ENCODE measurements at regions of chr6 and their contacts with region 1.

Region 1: GRCh38 chr6:89792873-89793272 is 26.7 kb downstream of the MDN1 start:
- H3K4me3 ChIP-seq: no peak overlapping the region
- H3K27ac ChIP-seq: no peak overlapping the region
- H3K4me1 ChIP-seq: no peaks in the 10 kb centered on the region
- CTCF ChIP-seq: peak; percentile 56

Region 2: GRCh38 chr6:89483111-89483720 is 309.7 kb before region 1 on chr6:
- CTCF ChIA-PET with region 1: no interaction called
- POLR2A ChIA-PET with region 1: no interaction called
- H3K4me3 ChIP-seq: no peak overlapping the region
- H3K27ac ChIP-seq: peak overlapping the region; percentile 42; the same call in 1 of the 2 replicates
- H3K4me1 ChIP-seq: peaks cover 6% of the 10 kb centered on the region; the same call in 1 of the 2 replicates
- CTCF ChIP-seq: no peak

Region 3: GRCh38 chr6:89805814-89806371 is 13.0 kb after region 1 on chr6:
- CTCF ChIA-PET with region 1: interaction called, 22 read pairs
- POLR2A ChIA-PET with region 1: no interaction called
- H3K4me3 ChIP-seq: no peak overlapping the region
- H3K27ac ChIP-seq: no peak overlapping the region
- H3K4me1 ChIP-seq: no peaks in the 10 kb centered on the region; the same call in 1 of the 2 replicates
- CTCF ChIP-seq: no peak

Region 4: DNA sequence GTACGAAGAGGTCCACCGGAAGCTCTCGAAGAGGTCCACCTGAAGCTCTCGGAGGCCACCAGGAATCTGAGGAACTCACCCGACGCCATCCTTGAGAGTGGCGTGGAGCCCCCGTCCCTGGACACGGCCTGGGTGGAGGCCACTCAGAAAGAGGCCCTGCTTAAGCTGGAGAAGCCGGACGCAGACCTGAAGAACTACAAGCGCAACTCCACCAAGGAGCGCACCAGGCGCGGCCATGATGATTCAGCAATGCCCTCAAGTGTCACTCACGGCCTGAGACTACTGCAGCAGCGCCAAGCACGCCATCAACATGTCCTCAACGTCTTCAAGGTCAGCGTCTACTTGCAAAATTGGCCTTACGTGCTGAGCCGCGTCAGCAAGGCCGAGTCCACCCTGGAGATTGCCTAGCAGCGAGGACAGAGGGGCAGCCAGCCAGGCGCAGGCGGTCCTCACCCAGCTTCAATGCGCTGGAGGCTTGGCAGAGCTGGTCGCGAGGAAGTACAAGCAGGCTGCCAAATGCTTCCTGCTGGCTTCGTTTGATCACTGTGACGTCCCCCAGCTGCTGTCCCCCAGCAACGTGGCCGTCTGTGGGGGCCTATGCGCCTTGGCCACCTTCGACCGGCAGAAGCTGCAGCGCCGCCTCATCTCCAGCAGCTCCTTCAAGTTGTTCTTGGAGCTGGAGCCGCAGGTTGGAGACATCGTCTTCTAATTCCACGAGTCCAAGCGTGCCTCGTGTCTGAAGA is 93.7 kb after region 1 on chr6:
- CTCF ChIA-PET with region 1: no interaction called
- POLR2A ChIA-PET with region 1: no interaction called
- H3K4me3 ChIP-seq: no peak overlapping the region
- H3K27ac ChIP-seq: no peak overlapping the region
- H3K4me1 ChIP-seq: no peaks in the 10 kb centered on the region
- CTCF ChIP-seq: no peak